ENCODE measurements at regions of chr3 and their contacts with region 1.

Region 1: GRCh38 chr3:13091898-13092611 is 18.8 kb upstream of the IQSEC1 start:
- DNase-seq: peak; percentile 52
- H3K4me3 ChIP-seq: no peak overlapping the region
- H3K27ac ChIP-seq: no peak overlapping the region
- H3K4me1 ChIP-seq: no peaks in the 10 kb centered on the region
- H3K27me3 ChIP-seq: no peaks in the 10 kb centered on the region
- CTCF ChIP-seq: peak; percentile 87 to 93

Region 2: GRCh38 chr3:13282986-13283876 is 191.2 kb after region 1 on chr3:
- CTCF ChIA-PET with region 1: no interaction called
- dilution Hi-C with region 1: no loop called
- in situ Hi-C with region 1: no loop called
- intact Hi-C with region 1: loop called (anchors 1 kb)
- DNase-seq: peak; percentile 5
- H3K4me3 ChIP-seq: peak overlapping the region in 1 of 3 experiments; percentile 38
- H3K27ac ChIP-seq: no peak overlapping the region
- H3K4me1 ChIP-seq: peaks cover 9% of the 10 kb centered on the region
- H3K27me3 ChIP-seq: peaks cover 14% of the 10 kb centered on the region
- CTCF ChIP-seq: peak in 1 of 2 donors; percentile 37

Region 3: DNA sequence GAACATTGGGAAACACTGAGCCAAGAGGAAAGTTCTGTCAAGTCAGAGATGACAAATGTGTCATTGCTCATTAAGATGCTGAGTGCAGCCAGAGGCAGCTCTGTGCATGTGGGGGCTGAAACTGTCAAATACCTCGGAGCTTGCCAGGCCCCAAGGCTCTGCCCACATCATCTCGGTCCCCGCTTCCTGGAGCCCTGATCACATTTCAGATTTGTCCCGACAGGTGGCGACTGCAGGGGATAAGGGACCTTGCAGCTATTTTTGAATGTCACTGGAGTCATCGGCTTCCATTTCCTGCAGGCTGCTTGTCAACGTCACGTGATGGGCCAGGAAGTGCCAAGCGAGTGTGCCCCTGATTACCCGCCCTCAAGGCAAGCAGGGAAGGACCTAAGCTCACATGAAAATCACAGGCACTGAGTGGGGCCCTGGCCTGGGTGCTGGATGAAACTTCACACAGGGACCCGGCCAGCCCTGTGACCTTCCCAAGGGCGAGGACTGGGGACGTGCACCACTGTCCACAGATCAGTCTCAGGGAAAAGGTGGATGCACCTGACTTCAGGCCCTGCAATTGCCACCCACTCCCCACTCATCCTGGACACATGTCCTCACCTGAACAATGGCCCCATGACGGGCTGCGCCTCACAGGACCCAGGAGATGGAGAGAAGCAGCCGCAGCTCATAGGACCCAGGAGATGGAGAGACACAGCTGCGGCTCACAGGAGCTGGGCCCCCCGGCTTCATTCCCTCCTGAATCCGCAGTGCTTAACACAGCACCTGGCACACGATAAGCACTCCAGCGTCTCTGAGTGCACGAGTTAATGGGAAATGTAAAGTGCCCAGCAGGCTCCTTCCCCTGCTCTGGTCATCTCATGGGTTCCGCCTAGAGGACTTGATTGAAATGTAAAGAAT is 254.7 kb after region 1 on chr3:
- CTCF ChIA-PET with region 1: no interaction called
- dilution Hi-C with region 1: no loop called
- in situ Hi-C with region 1: no loop called
- intact Hi-C with region 1: loop called (anchors 5 kb)
- DNase-seq: no peak
- H3K4me3 ChIP-seq: no peak overlapping the region
- H3K27ac ChIP-seq: no peak overlapping the region
- H3K4me1 ChIP-seq: no peaks in the 10 kb centered on the region
- H3K27me3 ChIP-seq: peaks cover 2% of the 10 kb centered on the region
- CTCF ChIP-seq: peak in 1 of 2 donors; percentile 23

Region 4: GRCh38 chr3:13452490-13453335 is 360.7 kb after region 1 on chr3:
- CTCF ChIA-PET with region 1: interaction called, 7 read pairs
- dilution Hi-C with region 1: no loop called
- in situ Hi-C with region 1: loop called in 1 of 2 experiments (anchors 10 kb)
- intact Hi-C with region 1: loop called (anchors 1 kb)
- DNase-seq: peak; percentile 38
- H3K4me3 ChIP-seq: no peak overlapping the region
- H3K27ac ChIP-seq: peak overlapping the region; percentile 72
- H3K4me1 ChIP-seq: peaks cover 10% of the 10 kb centered on the region
- H3K27me3 ChIP-seq: no peaks in the 10 kb centered on the region
- CTCF ChIP-seq: peak; percentile 63 to 70

Region 5: GRCh38 chr3:13495921-13496723 is 404.1 kb after region 1 on chr3:
- CTCF ChIA-PET with region 1: no interaction called
- dilution Hi-C with region 1: no loop called
- in situ Hi-C with region 1: loop called in 1 of 2 experiments (anchors 10 kb)
- intact Hi-C with region 1: loop called (anchors 1 kb)
- DNase-seq: peak; percentile 57
- H3K4me3 ChIP-seq: no peak overlapping the region
- H3K27ac ChIP-seq: no peak overlapping the region
- H3K4me1 ChIP-seq: no peaks in the 10 kb centered on the region
- H3K27me3 ChIP-seq: no peaks in the 10 kb centered on the region
- CTCF ChIP-seq: peak; percentile 96

Measured in mammary epithelial cell (primary cell).